ENCODE measurements at regions of chr20 and their contacts with region 1.

Region 1: DNA sequence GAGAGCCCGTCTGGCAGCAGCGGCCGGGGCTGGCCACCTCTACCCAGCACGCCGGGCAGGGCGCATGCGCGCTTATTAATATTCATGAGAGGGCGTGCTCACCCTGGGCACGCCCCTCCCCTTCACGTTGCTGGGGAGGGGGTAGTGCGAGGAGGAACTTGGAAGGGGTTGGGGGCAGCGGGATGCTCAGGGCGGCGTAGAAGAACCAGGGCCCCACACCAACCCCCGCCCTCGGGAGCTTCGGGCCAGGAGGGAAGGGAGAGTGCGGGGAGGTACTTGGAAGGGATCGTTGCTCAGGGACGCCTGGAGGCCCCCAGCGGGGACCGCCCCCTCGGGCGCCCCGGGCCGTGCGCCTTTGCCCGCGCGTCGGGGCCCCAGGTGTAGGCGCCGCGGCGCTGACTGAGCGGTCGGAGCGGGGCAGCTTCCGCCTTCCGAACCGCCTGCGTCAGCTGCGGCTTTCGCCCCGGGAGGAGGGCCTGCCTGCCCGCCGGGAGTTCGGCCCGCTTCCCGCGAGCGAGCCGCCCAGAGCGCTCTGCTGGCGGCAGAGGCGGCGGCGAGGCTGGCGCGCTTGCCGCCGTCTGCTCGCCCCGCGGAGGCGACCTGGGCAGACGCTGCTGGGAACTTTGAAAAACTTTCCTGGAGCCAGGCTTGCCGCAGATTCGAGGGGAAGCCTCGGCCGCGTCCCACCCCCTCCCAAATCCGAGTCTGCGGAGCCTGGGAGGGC is at the start of gene JAG1:
- DNase-seq: peak; percentile 81
- ATAC-seq: peak; percentile 85
- H3K4me3 ChIP-seq: peak within 1 kb of the TSS; percentile 82 to 90
- H3K27ac ChIP-seq: peak within 1 kb of the TSS; percentile 82
- H3K4me1 ChIP-seq: peaks cover 13% of the 10 kb centered on the region
- H3K27me3 ChIP-seq: no peaks in the 10 kb centered on the region
- CTCF ChIP-seq: no peak
- total RNA-seq, gene JAG1: 21.2 TPM

Region 2: GRCh38 chr20:10621149-10621548 is 53.0 kb before region 1 on chr20:
- CTCF ChIA-PET with region 1: interaction called, 10 read pairs
- POLR2A ChIA-PET with region 1: no interaction called
- in situ Hi-C with region 1: no loop called
- intact Hi-C with region 1: no loop called
- DNase-seq: no peak
- ATAC-seq: no peak
- H3K4me3 ChIP-seq: no peak overlapping the region
- H3K27ac ChIP-seq: no peak overlapping the region
- H3K4me1 ChIP-seq: no peaks in the 10 kb centered on the region
- H3K27me3 ChIP-seq: no peaks in the 10 kb centered on the region
- CTCF ChIP-seq: no peak

Region 3: GRCh38 chr20:10739566-10739965 is 65.4 kb after region 1 on chr20:
- CTCF ChIA-PET with region 1: interaction called, 21 read pairs
- POLR2A ChIA-PET with region 1: no interaction called
- in situ Hi-C with region 1: no loop called
- intact Hi-C with region 1: no loop called
- DNase-seq: no peak
- ATAC-seq: peak; percentile 91
- H3K4me3 ChIP-seq: peak overlapping the region; percentile 3 to 41; a peak in 2 of 4 replicates
- H3K27ac ChIP-seq: no peak overlapping the region
- H3K4me1 ChIP-seq: no peaks in the 10 kb centered on the region; the same call in 1 of the 2 replicates
- H3K27me3 ChIP-seq: no peaks in the 10 kb centered on the region
- CTCF ChIP-seq: no peak

Region 4: DNA sequence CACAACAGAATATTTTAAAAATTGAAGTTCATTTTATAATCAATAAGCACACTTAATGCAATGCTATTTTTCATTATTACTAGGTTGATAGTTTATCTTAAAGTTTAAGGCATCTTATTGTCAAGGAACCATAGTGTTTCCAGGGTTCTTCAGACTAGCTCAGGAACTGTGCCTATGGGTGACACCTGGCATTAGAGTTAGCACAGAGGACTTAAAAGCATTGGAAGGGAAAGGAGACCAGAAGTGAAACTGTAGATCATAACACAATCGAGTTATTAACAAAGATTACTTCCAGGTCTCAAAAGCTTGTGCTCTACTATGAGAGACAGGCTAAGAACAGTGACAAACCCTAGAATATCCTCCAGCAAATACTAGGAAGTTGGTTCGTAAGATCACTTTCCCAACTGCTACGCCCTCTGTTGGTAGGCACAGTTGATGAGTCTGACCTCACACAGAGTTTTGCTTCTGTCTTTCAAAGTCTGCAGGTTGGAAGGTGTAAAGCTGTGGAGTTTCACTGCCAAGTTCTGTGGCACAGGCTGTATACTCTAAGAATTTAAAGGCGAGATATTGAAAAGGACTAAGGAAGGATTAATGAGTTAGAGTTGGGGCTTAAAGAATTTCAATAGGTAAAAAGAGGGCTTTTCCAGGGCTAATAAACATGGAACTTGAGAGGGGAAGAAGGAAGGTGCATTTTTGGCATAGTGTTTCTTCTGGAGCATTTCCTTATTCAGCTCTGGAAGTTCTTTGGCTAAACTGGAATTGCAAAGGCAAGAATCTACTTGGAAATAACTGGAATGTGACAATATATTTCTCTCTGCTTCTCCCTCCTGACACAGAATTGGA is 531.0 kb after region 1 on chr20:
- CTCF ChIA-PET with region 1: interaction called, 4 read pairs
- POLR2A ChIA-PET with region 1: no interaction called
- in situ Hi-C with region 1: no loop called
- intact Hi-C with region 1: loop called (anchors 2 kb)
- DNase-seq: peak; percentile 85
- ATAC-seq: peak; percentile 90
- H3K4me3 ChIP-seq: no peak overlapping the region
- H3K27ac ChIP-seq: no peak overlapping the region; the same call in 1 of the 2 replicates
- H3K4me1 ChIP-seq: peaks cover 14% of the 10 kb centered on the region; the same call in 1 of the 2 replicates
- H3K27me3 ChIP-seq: no peaks in the 10 kb centered on the region
- CTCF ChIP-seq: peak; percentile 88

Region 5: GRCh38 chr20:11544029-11544678 is 870.0 kb after region 1 on chr20:
- CTCF ChIA-PET with region 1: interaction called, 7 read pairs
- POLR2A ChIA-PET with region 1: no interaction called
- in situ Hi-C with region 1: no loop called
- intact Hi-C with region 1: loop called (anchors 5 kb)
- DNase-seq: peak; percentile 48
- ATAC-seq: peak; percentile 90
- H3K4me3 ChIP-seq: peak overlapping the region in 1 of 2 experiments; percentile 32; a peak in 2 of 4 replicates
- H3K27ac ChIP-seq: peak overlapping the region; percentile 86
- H3K4me1 ChIP-seq: peaks cover 16% of the 10 kb centered on the region
- H3K27me3 ChIP-seq: no peaks in the 10 kb centered on the region
- CTCF ChIP-seq: peak; percentile 63